Activated CD8-positive, alpha-beta memory T cell treated with anti-CD3 and anti-CD28 coated beads, Interleukin-2, amount 10 ng/mL, durations not matched to agents 7 days and 5 days (primary cell): ENCODE measurements at regions of chr18 and their contacts with region 1.

Region 1: GRCh38 chr18:76803814-76804213 is 18.5 kb upstream of the ZNF236 start:
- DNase-seq: peak; percentile 80
- ATAC-seq: peak; percentile 73
- H3K4me3 Mint-ChIP-seq: no peak overlapping the region
- H3K27ac Mint-ChIP-seq: no peak overlapping the region
- H3K4me1 Mint-ChIP-seq: peaks cover 7% of the 10 kb centered on the region
- H3K27me3 Mint-ChIP-seq: peaks cover 17% of the 10 kb centered on the region

Region 2: DNA sequence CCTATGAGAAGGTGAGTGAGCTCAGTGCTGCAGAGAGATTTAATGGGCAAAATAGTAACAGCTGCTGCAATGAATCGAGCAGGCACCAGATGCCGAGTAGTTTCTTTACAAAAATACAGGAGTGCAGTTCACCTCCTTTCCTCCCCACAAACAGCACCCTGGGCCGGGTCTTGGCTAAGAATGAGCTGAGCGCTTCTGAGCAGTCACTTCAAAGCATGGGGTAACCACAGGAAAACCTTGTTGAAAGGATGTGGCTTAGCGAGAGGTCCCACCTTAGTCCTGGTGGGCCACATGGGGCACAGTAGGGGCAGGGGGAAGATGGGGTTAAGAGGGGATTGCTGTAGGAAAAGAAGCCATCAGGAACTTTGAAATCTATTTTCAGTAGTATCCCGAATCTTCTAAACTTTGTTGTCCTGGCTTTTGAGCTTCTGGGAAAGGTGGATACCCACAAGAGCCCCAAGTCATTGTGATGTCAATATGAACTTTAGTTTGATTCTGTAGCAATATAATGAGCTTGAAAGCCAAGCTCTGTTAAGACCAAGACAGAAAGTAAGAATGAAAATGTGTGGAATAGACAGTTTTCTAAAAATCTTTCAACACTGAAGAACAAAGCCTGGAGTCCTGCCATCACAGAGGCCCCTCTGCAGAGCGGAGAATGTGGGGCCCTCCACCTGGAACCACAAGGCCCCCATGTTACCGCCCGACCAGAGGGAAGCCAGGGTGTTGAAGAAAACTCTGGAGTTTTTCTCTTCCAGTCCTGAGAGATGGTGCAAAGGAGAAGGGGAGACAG is 82.4 kb before region 1 on chr18:
- CTCF ChIA-PET with region 1: interaction called, 13 read pairs
- DNase-seq: peak; percentile 93
- ATAC-seq: peak; percentile 96
- H3K4me3 Mint-ChIP-seq: peak overlapping the region; percentile 65
- H3K27ac Mint-ChIP-seq: peak overlapping the region; percentile 93
- H3K4me1 Mint-ChIP-seq: peaks cover 42% of the 10 kb centered on the region
- H3K27me3 Mint-ChIP-seq: peaks cover 23% of the 10 kb centered on the region

Region 3: GRCh38 chr18:76791106-76791505 is 12.7 kb before region 1 on chr18:
- CTCF ChIA-PET with region 1: interaction called, 54 read pairs
- DNase-seq: no peak
- ATAC-seq: no peak
- H3K4me3 Mint-ChIP-seq: no peak overlapping the region
- H3K27ac Mint-ChIP-seq: no peak overlapping the region
- H3K4me1 Mint-ChIP-seq: peaks cover 17% of the 10 kb centered on the region
- H3K27me3 Mint-ChIP-seq: peaks cover 18% of the 10 kb centered on the region

Region 4: GRCh38 chr18:76822510-76823160 is 18.8 kb after region 1 on chr18 and contains the start of gene ZNF236:
- CTCF ChIA-PET with region 1: interaction called, 57 read pairs
- DNase-seq: peak; percentile 72
- ATAC-seq: peak; percentile 70
- H3K4me3 Mint-ChIP-seq: peak within 1 kb of the TSS; percentile 89
- H3K27ac Mint-ChIP-seq: peak within 1 kb of the TSS; percentile 91
- H3K4me1 Mint-ChIP-seq: peaks cover 55% of the 10 kb centered on the region
- H3K27me3 Mint-ChIP-seq: no peaks in the 10 kb centered on the region
- total RNA-seq, gene ZNF236: 16.8 to 22.9 TPM

Region 5: GRCh38 chr18:76982841-76983587 is 179.2 kb after region 1 on chr18:
- CTCF ChIA-PET with region 1: interaction called, 65 read pairs
- DNase-seq: peak; percentile 93
- ATAC-seq: peak; percentile 97
- H3K4me3 Mint-ChIP-seq: no peak overlapping the region
- H3K27ac Mint-ChIP-seq: no peak overlapping the region
- H3K4me1 Mint-ChIP-seq: peaks cover 6% of the 10 kb centered on the region
- H3K27me3 Mint-ChIP-seq: no peaks in the 10 kb centered on the region

Region 6: DNA sequence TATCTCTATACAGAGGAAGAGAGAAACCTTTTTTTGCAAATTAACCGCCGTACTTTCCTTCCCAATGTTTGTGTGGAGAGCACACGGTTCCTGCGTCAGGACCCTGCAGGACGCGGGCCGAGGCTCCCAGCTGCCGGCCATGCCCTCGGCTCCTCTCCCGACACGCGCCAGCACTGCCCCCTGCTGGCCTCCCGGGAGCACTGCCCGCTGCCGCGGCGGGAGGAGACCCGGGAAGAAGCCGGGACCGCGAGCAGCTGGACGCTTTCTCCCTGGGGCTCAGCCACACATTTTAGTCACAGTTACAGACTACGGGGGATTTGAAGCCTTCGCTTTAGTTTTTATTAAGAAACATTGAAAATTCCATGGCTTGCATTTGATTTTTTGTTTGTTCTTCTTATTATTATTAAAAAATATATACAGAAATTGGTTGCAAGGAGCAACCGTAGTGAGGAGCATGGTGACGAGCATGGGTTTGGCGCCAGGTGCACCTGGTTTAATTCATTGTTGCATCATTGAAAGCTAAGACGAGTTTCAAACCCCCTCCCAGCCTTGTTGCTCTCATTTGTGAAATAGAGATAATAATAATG is 847.1 kb after region 1 on chr18:
- CTCF ChIA-PET with region 1: interaction called, 18 read pairs
- DNase-seq: peak; percentile 66
- ATAC-seq: peak; percentile 74
- H3K4me3 Mint-ChIP-seq: no peak overlapping the region
- H3K27ac Mint-ChIP-seq: no peak overlapping the region
- H3K4me1 Mint-ChIP-seq: peaks cover 2% of the 10 kb centered on the region
- H3K27me3 Mint-ChIP-seq: no peaks in the 10 kb centered on the region